Activated B cell treated with CpG ODN at 0.5 μM for 24 hours (primary cell): ENCODE measurements at regions of chr3 and their contacts with region 1.

Region 1: GRCh38 chr3:142447852-142448823 is at the start of gene XRN1:
- DNase-seq: peak; percentile 96
- ATAC-seq: peak; percentile 97
- H3K4me3 Mint-ChIP-seq: peak within 1 kb of the TSS; percentile 97
- H3K27ac Mint-ChIP-seq: peak within 1 kb of the TSS; percentile 98
- H3K4me1 Mint-ChIP-seq: peaks cover 44% of the 10 kb centered on the region
- H3K27me3 Mint-ChIP-seq: no peaks in the 10 kb centered on the region
- CTCF ChIP-seq: no peak
- total RNA-seq, gene XRN1: 55.0 and 63.0 TPM in 2 replicates

Region 2: GRCh38 chr3:142148792-142149672 is 299.1 kb before region 1 on chr3 and contains the start of gene TFDP2:
- CTCF ChIA-PET with region 1: no interaction called
- POLR2A ChIA-PET with region 1: no interaction called
- intact Hi-C with region 1: loop called (anchors 2 kb)
- DNase-seq: peak; percentile 78
- ATAC-seq: peak; percentile 99
- H3K4me3 Mint-ChIP-seq: peak within 1 kb of the TSS; percentile 86
- H3K27ac Mint-ChIP-seq: peak within 1 kb of the TSS; percentile 72
- H3K4me1 Mint-ChIP-seq: peaks cover 14% of the 10 kb centered on the region
- H3K27me3 Mint-ChIP-seq: no peaks in the 10 kb centered on the region
- CTCF ChIP-seq: no peak
- total RNA-seq, gene TFDP2: 20.0 and 23.1 TPM in 2 replicates

Region 3: GRCh38 chr3:142226484-142226883 is 221.7 kb before region 1 on chr3:
- CTCF ChIA-PET with region 1: no interaction called
- POLR2A ChIA-PET with region 1: no interaction called
- intact Hi-C with region 1: loop called (anchors 1 kb)
- DNase-seq: no peak
- ATAC-seq: no peak
- H3K4me3 Mint-ChIP-seq: peak overlapping the region; percentile 38
- H3K27ac Mint-ChIP-seq: no peak overlapping the region
- H3K4me1 Mint-ChIP-seq: peaks cover 6% of the 10 kb centered on the region
- H3K27me3 Mint-ChIP-seq: no peaks in the 10 kb centered on the region
- CTCF ChIP-seq: no peak

Region 4: DNA sequence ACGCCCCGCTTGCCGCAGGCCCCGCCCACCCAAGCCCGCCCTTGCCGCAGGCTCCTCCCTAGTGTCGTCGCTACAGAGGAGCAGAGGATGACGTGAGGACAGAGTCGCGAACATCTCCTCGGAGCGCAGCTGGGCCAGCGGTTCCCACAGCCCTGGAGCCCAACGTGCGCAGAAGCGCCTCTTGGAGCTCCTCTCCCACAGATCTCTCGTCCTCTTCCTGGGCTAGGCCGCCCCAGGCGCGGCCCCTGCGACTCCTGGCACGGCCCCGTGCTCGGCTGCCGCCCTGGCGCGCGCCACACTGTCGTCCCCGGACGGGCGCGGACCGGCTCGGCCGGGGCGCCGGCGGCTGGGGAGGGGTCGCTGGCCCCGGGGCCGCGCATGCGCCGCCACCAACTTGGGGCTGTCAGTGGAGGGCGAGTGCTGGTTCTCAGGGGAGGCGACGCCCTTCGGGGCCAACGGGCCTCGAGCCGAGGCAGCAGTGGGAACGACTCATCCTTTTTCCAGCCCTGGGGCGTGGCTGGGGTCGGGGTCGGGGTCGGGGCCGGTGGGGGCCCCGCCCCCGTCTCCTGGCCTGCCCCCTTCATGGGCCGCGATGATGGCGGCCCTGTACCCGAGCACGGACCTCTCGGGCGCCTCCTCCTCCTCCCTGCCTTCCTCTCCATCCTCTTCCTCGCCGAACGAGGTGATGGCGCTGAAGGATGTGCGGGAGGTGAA is 276.0 kb after region 1 on chr3 and contains the start of gene TRPC1:
- CTCF ChIA-PET with region 1: no interaction called
- POLR2A ChIA-PET with region 1: no interaction called
- intact Hi-C with region 1: loop called (anchors 5 kb)
- DNase-seq: peak; percentile 54
- ATAC-seq: peak; percentile 95
- H3K4me3 Mint-ChIP-seq: peak within 1 kb of the TSS; percentile 87
- H3K27ac Mint-ChIP-seq: peak within 1 kb of the TSS; percentile 76
- H3K4me1 Mint-ChIP-seq: peaks cover 5% of the 10 kb centered on the region
- H3K27me3 Mint-ChIP-seq: peaks cover 22% of the 10 kb centered on the region
- CTCF ChIP-seq: no peak
- total RNA-seq, gene TRPC1: 1.2 and 1.3 TPM in 2 replicates